ENCODE measurements at regions of chr1 and their contacts with region 1.

Region 1: DNA sequence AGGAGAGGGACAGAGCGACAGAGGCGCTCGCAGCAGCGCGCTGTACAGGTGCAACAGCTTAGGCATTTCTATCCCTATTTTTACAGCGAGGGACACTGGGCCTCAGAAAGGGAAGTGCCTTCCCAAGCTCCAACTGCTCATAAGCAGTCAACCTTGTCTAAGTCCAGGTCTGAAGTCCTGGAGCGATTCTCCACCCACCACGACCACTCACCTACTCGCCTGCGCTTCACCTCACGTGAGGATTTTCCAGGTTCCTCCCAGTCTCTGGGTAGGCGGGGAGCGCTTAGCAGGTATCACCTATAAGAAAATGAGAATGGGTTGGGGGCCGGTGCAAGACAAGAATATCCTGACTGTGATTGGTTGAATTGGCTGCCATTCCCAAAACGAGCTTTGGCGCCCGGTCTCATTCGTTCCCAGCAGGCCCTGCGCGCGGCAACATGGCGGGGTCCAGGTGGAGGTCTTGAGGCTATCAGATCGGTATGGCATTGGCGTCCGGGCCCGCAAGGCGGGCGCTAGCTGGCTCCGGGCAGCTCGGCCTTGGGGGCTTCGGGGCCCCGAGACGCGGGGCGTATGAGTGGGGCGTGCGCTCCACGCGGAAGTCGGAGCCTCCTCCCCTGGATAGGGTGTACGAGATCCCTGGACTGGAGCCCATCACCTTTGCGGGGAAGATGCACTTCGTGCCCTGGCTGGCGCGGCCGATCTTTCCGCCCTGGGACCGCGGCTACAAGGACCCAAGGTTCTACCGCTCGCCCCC is at the starts of genes CYB5RL and MRPL37:
- DNase-seq: peak; percentile 96
- ATAC-seq: peak; percentile 98
- H3K4me3 Mint-ChIP-seq: peak within 1 kb of the TSS; percentile 94
- H3K27ac Mint-ChIP-seq: peak within 1 kb of the TSS; percentile 84
- H3K4me1 Mint-ChIP-seq: peaks cover 28% of the 10 kb centered on the region
- H3K27me3 Mint-ChIP-seq: no peaks in the 10 kb centered on the region
- CTCF ChIP-seq: no peak
- total RNA-seq, gene CYB5RL: 11.4 to 12.6 TPM
- total RNA-seq, gene MRPL37: 194 to 198 TPM

Region 2: GRCh38 chr1:54180701-54181360 is 19.1 kb before region 1 on chr1:
- CTCF ChIA-PET with region 1: interaction called, 16 read pairs
- POLR2A ChIA-PET with region 1: no interaction called
- intact Hi-C with region 1: no loop called
- DNase-seq: no peak
- ATAC-seq: no peak
- H3K4me3 Mint-ChIP-seq: no peak overlapping the region
- H3K27ac Mint-ChIP-seq: no peak overlapping the region
- H3K4me1 Mint-ChIP-seq: no peaks in the 10 kb centered on the region
- H3K27me3 Mint-ChIP-seq: no peaks in the 10 kb centered on the region
- CTCF ChIP-seq: no peak